ENCODE measurements at regions of chr18 and their contacts with region 1.

Region 1: DNA sequence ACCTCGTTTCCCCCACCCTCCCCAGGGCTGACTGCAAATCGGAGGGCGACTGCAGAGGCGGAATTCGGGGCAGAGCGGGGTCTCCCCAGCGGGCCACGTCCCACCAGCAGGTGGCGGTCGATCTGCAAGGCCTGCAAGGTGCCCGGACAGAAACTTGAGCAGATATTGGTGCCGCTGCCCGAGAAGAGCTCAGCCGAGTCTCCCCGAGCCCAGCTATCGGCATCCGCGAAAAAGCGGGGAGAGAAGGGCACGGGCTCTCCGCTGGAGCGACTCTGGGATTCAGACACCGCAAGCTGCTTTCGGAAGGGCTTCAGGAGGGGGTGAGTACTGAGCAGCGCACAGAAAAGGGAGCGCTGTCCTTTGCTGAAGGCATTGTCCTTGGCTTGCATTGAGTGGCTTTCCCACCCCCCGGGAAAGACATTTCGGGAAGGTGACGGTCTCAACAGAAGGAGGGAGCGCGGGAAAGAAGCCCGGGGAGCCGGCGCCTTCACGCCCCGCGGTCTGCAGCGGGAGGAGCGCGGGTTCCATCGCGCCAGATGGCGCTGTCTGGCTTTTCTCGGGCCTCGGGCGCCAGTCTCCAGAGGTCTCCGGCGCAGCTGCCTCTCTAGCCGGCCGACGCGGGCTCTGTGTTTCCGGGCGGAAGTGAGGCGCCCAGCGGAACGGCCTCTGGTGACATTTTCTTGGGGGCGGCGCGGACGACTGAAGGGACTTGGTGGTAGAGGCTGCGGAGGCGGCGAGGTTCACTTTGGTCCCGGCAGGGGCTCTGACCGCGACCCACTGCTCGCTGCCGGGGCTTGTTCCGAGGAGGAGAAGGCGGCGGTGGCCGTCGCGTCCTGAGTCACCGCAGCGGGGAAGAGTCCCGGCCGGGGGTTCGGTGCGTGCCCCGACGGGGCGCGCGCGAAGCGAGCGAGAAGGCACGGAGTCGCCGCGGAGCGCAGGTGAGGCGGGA is 69.5 kb downstream of the HAUS1 start:
- DNase-seq: peak; percentile 97
- H3K4me3 ChIP-seq: peak overlapping the region; percentile 94
- H3K27ac ChIP-seq: peak overlapping the region; percentile 98
- H3K4me1 ChIP-seq: peaks cover 4% of the 10 kb centered on the region
- H3K27me3 ChIP-seq: no peaks in the 10 kb centered on the region
- CTCF ChIP-seq: peak; percentile 83

Region 2: DNA sequence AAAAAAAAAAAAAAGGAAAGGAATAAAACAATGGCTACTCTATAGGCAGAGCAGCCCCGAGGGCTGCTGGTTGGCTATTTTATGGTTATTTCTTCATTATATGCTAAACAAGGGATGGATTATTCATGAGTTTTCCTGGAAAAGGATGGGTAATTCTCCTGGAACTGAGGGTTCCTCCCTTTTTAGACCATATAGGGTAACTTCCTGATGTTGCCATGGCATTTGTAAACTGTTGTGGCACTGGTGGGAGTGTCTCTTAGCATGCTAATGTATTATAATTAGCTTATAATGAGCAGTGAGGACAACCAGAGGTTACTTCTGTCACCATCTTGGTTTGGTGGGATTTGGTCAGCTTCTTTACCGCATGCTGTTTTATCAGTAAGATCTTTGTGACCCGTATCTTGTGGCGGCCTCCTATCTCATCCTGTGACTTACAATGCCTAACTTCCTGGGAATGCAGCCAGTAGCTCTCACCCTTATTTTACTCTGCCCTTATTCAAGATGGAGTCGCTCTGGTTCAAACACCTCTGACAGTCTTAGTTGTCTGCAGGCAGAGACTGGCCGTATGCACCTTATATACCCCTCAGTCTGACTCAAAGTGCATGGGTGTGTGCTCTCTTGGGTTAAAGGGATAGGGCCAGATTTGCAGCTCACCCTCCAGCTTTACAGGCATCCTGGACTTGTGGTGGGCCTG is 11.8 kb before region 1 on chr18:
- CTCF ChIA-PET with region 1: interaction called, 10 read pairs
- POLR2A ChIA-PET with region 1: no interaction called
- intact Hi-C with region 1: no loop called
- DNase-seq: no peak
- H3K4me3 ChIP-seq: no peak overlapping the region
- H3K27ac ChIP-seq: no peak overlapping the region
- H3K4me1 ChIP-seq: no peaks in the 10 kb centered on the region
- H3K27me3 ChIP-seq: no peaks in the 10 kb centered on the region
- CTCF ChIP-seq: no peak

Region 3: GRCh38 chr18:46213295-46213694 is 39.6 kb after region 1 on chr18:
- CTCF ChIA-PET with region 1: interaction called, 13 read pairs
- POLR2A ChIA-PET with region 1: interaction called, 11 read pairs
- intact Hi-C with region 1: loop called (anchors 5 kb)
- DNase-seq: peak; percentile 43
- H3K4me3 ChIP-seq: no peak overlapping the region
- H3K27ac ChIP-seq: no peak overlapping the region
- H3K4me1 ChIP-seq: peaks cover 21% of the 10 kb centered on the region
- H3K27me3 ChIP-seq: no peaks in the 10 kb centered on the region
- CTCF ChIP-seq: peak; percentile 68

Region 4: GRCh38 chr18:46265196-46266156 is 91.8 kb after region 1 on chr18:
- CTCF ChIA-PET with region 1: interaction called, 3 read pairs
- POLR2A ChIA-PET with region 1: interaction called, 3 read pairs
- intact Hi-C with region 1: loop called (anchors 5 kb)
- DNase-seq: peak; percentile 87
- H3K4me3 ChIP-seq: no peak overlapping the region
- H3K27ac ChIP-seq: peak overlapping the region; percentile 90
- H3K4me1 ChIP-seq: peaks cover 37% of the 10 kb centered on the region
- H3K27me3 ChIP-seq: no peaks in the 10 kb centered on the region
- CTCF ChIP-seq: no peak

Region 5: GRCh38 chr18:46281185-46282176 is 107.8 kb after region 1 on chr18:
- CTCF ChIA-PET with region 1: interaction called, 21 read pairs
- POLR2A ChIA-PET with region 1: no interaction called
- intact Hi-C with region 1: no loop called
- DNase-seq: peak; percentile 83
- H3K4me3 ChIP-seq: no peak overlapping the region
- H3K27ac ChIP-seq: no peak overlapping the region
- H3K4me1 ChIP-seq: peaks cover 28% of the 10 kb centered on the region
- H3K27me3 ChIP-seq: no peaks in the 10 kb centered on the region
- CTCF ChIP-seq: peak; percentile 92

Region 6: DNA sequence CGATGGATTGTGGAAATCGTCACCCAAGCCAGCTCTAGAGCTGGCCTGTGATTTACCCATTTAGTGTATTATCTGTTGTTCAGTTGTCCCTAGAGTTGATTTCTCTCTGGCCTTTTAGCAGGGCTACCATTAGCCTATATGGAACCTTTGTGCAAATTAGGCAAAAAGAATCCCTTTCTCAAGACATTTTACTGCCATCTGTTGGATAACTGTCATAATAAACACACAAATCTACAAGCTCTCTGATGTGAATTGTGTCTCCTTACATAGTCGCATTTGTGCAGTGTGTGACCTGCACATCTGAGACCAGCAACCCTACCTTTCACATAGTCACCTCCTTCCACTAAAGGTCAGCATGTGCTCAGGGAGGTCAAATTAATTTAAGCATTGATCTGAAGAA is 449.3 kb after region 1 on chr18:
- CTCF ChIA-PET with region 1: interaction called, 13 read pairs
- POLR2A ChIA-PET with region 1: no interaction called
- intact Hi-C with region 1: no loop called
- DNase-seq: peak; percentile 60
- H3K4me3 ChIP-seq: no peak overlapping the region
- H3K27ac ChIP-seq: no peak overlapping the region
- H3K4me1 ChIP-seq: peaks cover 11% of the 10 kb centered on the region
- H3K27me3 ChIP-seq: no peaks in the 10 kb centered on the region
- CTCF ChIP-seq: peak; percentile 56

Region 7: GRCh38 chr18:46660955-46661749 is 487.5 kb after region 1 on chr18:
- CTCF ChIA-PET with region 1: interaction called, 41 read pairs
- POLR2A ChIA-PET with region 1: interaction called, 7 read pairs
- intact Hi-C with region 1: loop called (anchors 1 kb)
- DNase-seq: peak; percentile 49
- H3K4me3 ChIP-seq: no peak overlapping the region
- H3K27ac ChIP-seq: no peak overlapping the region
- H3K4me1 ChIP-seq: no peaks in the 10 kb centered on the region
- H3K27me3 ChIP-seq: no peaks in the 10 kb centered on the region
- CTCF ChIP-seq: no peak